BJ (cell line): ENCODE measurements at regions of chr14 and their contacts with region 1.

Region 1: DNA sequence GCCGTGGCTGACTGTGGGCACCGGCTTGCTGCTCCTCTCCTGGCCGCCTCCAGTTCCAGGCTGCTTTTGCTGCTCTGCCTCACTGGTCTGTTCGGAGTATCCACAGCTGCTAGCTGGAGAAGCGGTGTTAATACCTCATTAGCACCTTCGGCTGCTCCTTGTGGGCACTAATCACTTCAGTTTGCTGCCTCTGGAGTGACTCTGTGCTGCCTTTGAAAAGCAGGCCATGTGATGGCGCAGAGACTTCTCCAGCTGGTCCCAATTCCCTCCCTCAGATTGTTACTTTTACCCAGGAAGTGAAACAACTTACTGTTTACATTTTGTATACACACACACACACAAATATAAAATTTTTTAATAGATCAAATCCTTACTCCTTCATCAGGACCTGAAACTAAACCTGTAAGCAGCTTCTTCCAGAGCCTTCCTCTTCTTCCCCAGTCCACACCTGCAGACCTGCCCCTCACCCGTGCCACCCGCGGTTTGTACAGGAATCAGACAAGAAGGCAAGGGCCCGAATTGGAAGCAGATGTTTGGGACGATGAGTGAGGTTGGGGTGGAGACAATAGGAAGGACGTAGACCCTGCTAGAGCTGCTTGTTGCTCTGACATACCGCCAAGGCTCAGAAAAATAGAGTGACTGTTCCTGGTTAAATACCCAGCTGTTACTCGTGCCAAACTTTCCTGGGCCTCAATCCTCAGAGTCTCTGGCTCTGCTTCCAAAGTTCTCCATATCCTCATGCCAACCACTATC is 41.5 kb upstream of the LTBP2 start:
- DNase-seq: peak; percentile 29
- H3K4me3 ChIP-seq: no peak overlapping the region
- H3K27me3 ChIP-seq: no peaks in the 10 kb centered on the region
- CTCF ChIP-seq: no peak

Region 2: GRCh38 chr14:74469548-74470518 is 183.7 kb before region 1 on chr14:
- CTCF ChIA-PET with region 1: no interaction called
- POLR2A ChIA-PET with region 1: no interaction called
- DNase-seq: no peak
- H3K4me3 ChIP-seq: no peak overlapping the region
- H3K27me3 ChIP-seq: peaks cover 3% of the 10 kb centered on the region
- CTCF ChIP-seq: no peak

Region 3: DNA sequence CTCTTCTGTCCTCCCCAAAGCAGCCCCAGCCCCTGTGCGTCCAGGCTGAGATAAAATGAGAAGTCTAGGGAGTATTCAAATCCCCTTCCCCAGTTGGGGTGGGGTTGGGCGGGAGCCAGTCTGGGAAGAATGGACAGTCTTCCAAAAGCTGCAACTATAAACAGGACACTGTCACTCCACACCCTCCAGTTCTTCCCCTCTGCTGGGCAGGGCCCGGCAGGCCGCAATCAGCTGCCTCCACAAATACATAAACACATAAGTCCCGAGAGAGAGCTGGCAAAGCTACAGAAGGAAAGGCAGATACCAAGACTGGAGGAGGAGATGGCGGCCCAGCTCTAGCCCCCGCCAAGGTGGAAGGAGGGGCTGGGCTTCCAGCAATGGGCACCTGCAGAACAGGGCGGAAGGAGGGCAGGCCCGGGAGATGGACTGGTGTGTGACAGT is 54.2 kb before region 1 on chr14:
- CTCF ChIA-PET with region 1: no interaction called
- POLR2A ChIA-PET with region 1: interaction called, 15 read pairs
- DNase-seq: no peak
- H3K4me3 ChIP-seq: no peak overlapping the region
- H3K27me3 ChIP-seq: no peaks in the 10 kb centered on the region
- CTCF ChIP-seq: no peak